ENCODE measurements at regions of chr5 and their contacts with region 1.

Region 1: DNA sequence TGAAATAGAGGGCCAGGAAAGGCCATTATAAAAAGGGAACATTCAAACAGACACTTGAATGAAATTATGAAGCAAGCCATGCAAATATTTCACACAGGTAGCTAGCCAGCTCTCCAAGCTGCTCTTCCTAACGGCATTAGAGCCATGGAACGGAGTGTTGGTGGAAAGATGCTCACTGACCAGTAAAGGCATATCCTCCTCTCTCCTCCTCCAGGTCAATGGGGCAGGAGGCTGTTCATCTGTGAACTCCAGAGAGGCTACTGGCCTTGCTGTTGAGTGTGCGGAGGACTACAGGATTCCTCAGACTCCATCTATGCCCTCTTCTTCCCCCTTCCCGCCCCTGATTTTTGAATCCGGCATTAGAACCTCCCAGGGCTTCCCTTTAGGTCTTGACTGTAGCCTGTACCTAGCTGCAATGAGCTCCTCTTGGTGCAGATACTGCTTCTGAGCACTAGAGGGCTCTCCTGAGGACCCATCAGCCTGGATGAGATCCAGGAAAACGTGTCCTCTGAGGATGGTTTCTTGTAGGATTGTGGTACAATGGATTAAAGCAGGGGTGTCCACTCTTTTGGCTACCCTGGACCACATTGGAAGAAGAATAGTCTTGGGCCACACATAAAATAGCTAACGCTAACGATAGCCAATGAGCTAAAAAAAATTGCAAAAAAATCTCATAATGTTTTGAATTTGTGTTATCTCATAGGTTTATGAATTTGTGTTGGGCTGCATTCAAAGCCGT is 162.2 kb downstream of the SREK1 start:
- DNase-seq: peak in 1 of 2 donors; percentile 24
- ATAC-seq: peak; percentile 45 to 68
- H3K4me3 ChIP-seq: no peak overlapping the region
- H3K27ac ChIP-seq: no peak overlapping the region
- H3K4me1 ChIP-seq: peaks cover 0 to 14% of the 10 kb centered on the region in 2 donors
- H3K27me3 ChIP-seq: no peaks in the 10 kb centered on the region
- CTCF ChIP-seq: peak; percentile 24 to 71 (median 56)
- POLR2A ChIP-seq: no peak

Region 2: GRCh38 chr5:66757188-66757833 is 451.0 kb after region 1 on chr5:
- in situ Hi-C with region 1: loop called (anchors 5 to 25 kb)
- intact Hi-C with region 1: loop called (anchors 1 kb)
- DNase-seq: no peak
- ATAC-seq: no peak
- H3K4me3 ChIP-seq: no peak overlapping the region
- H3K27ac ChIP-seq: no peak overlapping the region
- H3K4me1 ChIP-seq: no peaks in the 10 kb centered on the region
- H3K27me3 ChIP-seq: no peaks in the 10 kb centered on the region
- CTCF ChIP-seq: peak in 2 of 5 experiments; percentile 22 to 33
- POLR2A ChIP-seq: no peak

Region 3: GRCh38 chr5:66821688-66822429 is 515.6 kb after region 1 on chr5:
- in situ Hi-C with region 1: no loop called
- intact Hi-C with region 1: no loop called
- DNase-seq: no peak
- ATAC-seq: no peak
- H3K4me3 ChIP-seq: no peak overlapping the region
- H3K27ac ChIP-seq: no peak overlapping the region
- H3K4me1 ChIP-seq: no peaks in the 10 kb centered on the region
- H3K27me3 ChIP-seq: no peaks in the 10 kb centered on the region
- CTCF ChIP-seq: no peak
- POLR2A ChIP-seq: no peak

Region 4: DNA sequence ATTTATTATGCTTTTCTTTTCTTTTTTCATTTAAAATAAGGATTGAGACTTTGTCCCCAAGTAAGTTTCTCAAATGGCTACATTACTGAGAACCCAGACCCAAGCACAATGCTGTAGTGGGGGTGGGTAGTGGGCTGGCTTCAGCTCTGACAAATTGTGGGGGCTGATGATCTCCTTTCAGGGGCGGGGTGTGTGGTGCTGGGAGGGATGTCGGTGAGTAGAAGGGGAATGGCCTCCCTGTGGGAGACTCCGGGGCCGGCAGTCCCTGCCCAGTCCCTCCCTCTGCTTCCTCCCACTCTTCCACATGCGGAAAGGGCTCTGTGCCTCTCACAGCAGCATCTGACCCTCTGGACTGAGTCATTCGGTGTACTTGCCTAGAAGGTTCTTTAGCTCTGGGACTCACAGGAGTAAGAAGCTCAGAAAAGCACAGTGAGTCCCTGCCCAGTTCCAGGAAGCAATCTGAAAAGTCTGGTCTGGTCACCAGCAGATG is 876.1 kb after region 1 on chr5:
- in situ Hi-C with region 1: loop called in 1 of 4 experiments (anchors 25 kb)
- intact Hi-C with region 1: no loop called
- DNase-seq: peak; percentile 35 to 62
- ATAC-seq: peak; percentile 80 to 83
- H3K4me3 ChIP-seq: no peak overlapping the region
- H3K27ac ChIP-seq: peak overlapping the region; percentile 34 to 50 (median 43)
- H3K4me1 ChIP-seq: peaks cover 0 to 3% of the 10 kb centered on the region in 2 donors
- H3K27me3 ChIP-seq: no peaks in the 10 kb centered on the region
- CTCF ChIP-seq: no peak
- POLR2A ChIP-seq: peak; percentile 13 to 15